MCF 10A (cell line): ENCODE measurements at regions of chr5 and their contacts with region 1.

Region 1: GRCh38 chr5:125412561-125413495 is 666.4 kb upstream of the ZNF608 start:
- DNase-seq: peak; percentile 75
- H3K4me3 Mint-ChIP-seq: peak overlapping the region; percentile 44
- H3K27ac Mint-ChIP-seq: peak overlapping the region; percentile 91
- H3K4me1 Mint-ChIP-seq: peaks cover 52% of the 10 kb centered on the region
- H3K27me3 Mint-ChIP-seq: no peaks in the 10 kb centered on the region
- CTCF ChIP-seq: peak; percentile 34

Region 2: GRCh38 chr5:124599028-124599973 is 813.5 kb before region 1 on chr5:
- CTCF ChIA-PET with region 1: no interaction called
- POLR2A ChIA-PET with region 1: no interaction called
- intact Hi-C with region 1: loop called (anchors 10 kb)
- DNase-seq: peak; percentile 45
- H3K4me3 Mint-ChIP-seq: peak overlapping the region; percentile 10
- H3K27ac Mint-ChIP-seq: peak overlapping the region; percentile 78
- H3K4me1 Mint-ChIP-seq: peaks cover 23% of the 10 kb centered on the region
- H3K27me3 Mint-ChIP-seq: no peaks in the 10 kb centered on the region
- CTCF ChIP-seq: no peak

Region 3: DNA sequence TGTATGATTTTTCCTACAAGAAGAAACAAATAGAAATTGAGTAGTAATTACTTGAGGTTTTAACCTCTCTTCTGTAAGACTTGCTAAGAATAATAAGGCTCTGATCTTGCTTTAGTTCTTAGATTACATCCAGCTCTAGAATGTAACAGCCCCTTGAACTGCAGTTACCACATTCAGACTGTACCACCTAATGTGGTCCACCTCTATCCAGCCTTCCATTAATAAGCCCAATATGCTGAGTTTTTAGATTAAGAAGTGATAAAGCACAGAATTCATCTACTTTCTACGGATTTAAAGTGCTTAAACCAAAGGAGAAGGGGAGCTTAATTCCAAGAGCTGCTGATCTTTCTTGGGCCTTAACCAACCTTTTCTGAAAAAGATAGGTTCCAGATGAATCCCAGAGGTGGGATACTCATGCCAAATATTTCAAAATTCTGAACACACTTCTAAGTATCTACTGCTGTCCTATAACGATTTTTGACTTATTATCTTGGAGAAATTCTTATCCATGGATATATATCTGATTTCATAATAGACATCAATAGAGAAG is 797.9 kb before region 1 on chr5:
- CTCF ChIA-PET with region 1: no interaction called
- POLR2A ChIA-PET with region 1: no interaction called
- intact Hi-C with region 1: no loop called
- DNase-seq: no peak
- H3K4me3 Mint-ChIP-seq: no peak overlapping the region
- H3K27ac Mint-ChIP-seq: no peak overlapping the region
- H3K4me1 Mint-ChIP-seq: no peaks in the 10 kb centered on the region
- H3K27me3 Mint-ChIP-seq: no peaks in the 10 kb centered on the region
- CTCF ChIP-seq: no peak

Region 4: DNA sequence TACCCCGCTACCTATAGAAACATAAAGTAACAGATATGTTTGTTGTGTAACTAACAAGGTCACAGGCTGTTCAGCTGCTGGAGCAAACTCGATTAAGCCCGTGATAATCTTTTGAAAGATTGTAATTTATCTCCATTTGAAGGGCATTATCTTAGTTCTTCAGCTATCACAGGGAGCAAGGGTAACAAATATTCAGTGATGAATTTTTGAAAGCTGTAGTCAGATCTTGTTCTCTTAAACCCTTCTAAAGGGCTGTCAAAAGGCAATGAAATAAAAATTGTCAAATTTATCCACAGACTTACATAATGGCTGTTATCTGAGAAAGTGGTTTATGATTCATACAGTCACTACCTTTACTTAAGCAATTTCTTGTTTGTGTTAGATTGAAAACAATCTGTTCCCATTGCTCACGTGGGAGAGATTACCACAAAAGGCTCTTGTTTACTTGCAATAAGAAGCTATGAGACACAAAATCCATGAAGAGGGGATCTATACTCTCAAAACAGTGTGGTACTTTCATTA is 588.1 kb before region 1 on chr5:
- CTCF ChIA-PET with region 1: no interaction called
- POLR2A ChIA-PET with region 1: interaction called, 24 read pairs
- intact Hi-C with region 1: no loop called
- DNase-seq: peak; percentile 96
- H3K4me3 Mint-ChIP-seq: peak overlapping the region; percentile 55
- H3K27ac Mint-ChIP-seq: peak overlapping the region; percentile 89
- H3K4me1 Mint-ChIP-seq: peaks cover 33% of the 10 kb centered on the region
- H3K27me3 Mint-ChIP-seq: no peaks in the 10 kb centered on the region
- CTCF ChIP-seq: no peak

Region 5: DNA sequence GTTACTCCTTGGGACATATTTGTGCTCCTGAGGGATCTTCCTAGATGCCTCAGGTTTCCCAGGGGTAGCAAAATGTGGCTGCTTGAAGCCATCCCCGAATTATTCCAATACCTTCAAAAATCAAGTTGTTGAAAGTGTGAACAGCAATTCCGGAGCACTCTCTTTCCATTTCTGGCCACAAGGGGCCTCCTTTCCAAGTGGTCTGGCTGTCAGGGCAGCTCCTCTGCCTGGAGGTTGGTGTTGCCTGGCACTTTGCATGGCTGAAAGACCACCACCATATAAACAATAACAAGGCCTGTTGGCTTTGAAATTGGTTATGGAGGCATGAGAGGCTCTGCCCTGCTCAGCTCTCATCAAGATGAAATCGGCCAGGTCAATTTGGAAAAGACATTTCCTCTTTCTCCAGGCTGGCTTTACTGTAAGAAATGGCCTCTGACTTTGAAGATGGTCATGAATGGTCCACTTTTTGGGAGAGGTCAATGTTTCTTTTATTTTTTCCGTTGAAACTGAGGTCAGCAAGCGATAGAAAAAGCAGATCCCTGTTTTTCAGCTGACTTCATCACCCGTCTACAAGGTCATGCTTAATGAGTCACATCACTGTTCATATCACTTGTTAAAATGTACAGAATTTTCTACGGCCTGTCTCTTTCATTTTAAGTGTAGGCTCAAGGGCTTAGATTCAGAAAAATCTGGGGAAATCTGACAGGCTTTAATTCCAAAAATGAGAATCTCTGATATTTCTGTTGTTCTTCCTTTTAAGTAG is 185.3 kb before region 1 on chr5:
- CTCF ChIA-PET with region 1: no interaction called
- POLR2A ChIA-PET with region 1: no interaction called
- intact Hi-C with region 1: loop called (anchors 2 kb)
- DNase-seq: peak; percentile 66
- H3K4me3 Mint-ChIP-seq: no peak overlapping the region
- H3K27ac Mint-ChIP-seq: no peak overlapping the region
- H3K4me1 Mint-ChIP-seq: peaks cover 12% of the 10 kb centered on the region
- H3K27me3 Mint-ChIP-seq: no peaks in the 10 kb centered on the region
- CTCF ChIP-seq: peak; percentile 73

Region 6: GRCh38 chr5:125484742-125485641 is 72.2 kb after region 1 on chr5:
- CTCF ChIA-PET with region 1: interaction called, 7 read pairs
- POLR2A ChIA-PET with region 1: interaction called, 106 read pairs
- intact Hi-C with region 1: loop called (anchors 2 kb)
- DNase-seq: peak; percentile 98
- H3K4me3 Mint-ChIP-seq: peak overlapping the region; percentile 64
- H3K27ac Mint-ChIP-seq: peak overlapping the region; percentile 84
- H3K4me1 Mint-ChIP-seq: peaks cover 51% of the 10 kb centered on the region
- H3K27me3 Mint-ChIP-seq: no peaks in the 10 kb centered on the region
- CTCF ChIP-seq: no peak

Region 7: GRCh38 chr5:125950012-125950411 is 537.2 kb after region 1 on chr5:
- CTCF ChIA-PET with region 1: no interaction called
- POLR2A ChIA-PET with region 1: no interaction called
- intact Hi-C with region 1: no loop called
- DNase-seq: no peak
- H3K4me3 Mint-ChIP-seq: no peak overlapping the region
- H3K27ac Mint-ChIP-seq: no peak overlapping the region
- H3K4me1 Mint-ChIP-seq: no peaks in the 10 kb centered on the region
- H3K27me3 Mint-ChIP-seq: no peaks in the 10 kb centered on the region
- CTCF ChIP-seq: no peak

Region 8: GRCh38 chr5:126124706-126125345 is 712.0 kb after region 1 on chr5:
- CTCF ChIA-PET with region 1: interaction called, 3 read pairs
- POLR2A ChIA-PET with region 1: interaction called, 3 read pairs
- intact Hi-C with region 1: loop called (anchors 1 kb)
- DNase-seq: peak; percentile 92
- H3K4me3 Mint-ChIP-seq: peak overlapping the region; percentile 30
- H3K27ac Mint-ChIP-seq: peak overlapping the region; percentile 71
- H3K4me1 Mint-ChIP-seq: peaks cover 46% of the 10 kb centered on the region
- H3K27me3 Mint-ChIP-seq: no peaks in the 10 kb centered on the region
- CTCF ChIP-seq: no peak